ENCODE measurements at regions of chr2 and their contacts with region 1.

Region 1: GRCh38 chr2:238263204-238264071 is 23.6 kb upstream of the HES6 start:
- DNase-seq: peak; percentile 84 to 99 (median 94)

Region 2: GRCh38 chr2:237858294-237859081 is 404.9 kb before region 1 on chr2:
- intact Hi-C with region 1: loop called (anchors 1 kb)
- DNase-seq: peak; percentile 67 to 96 (median 82)

Region 3: GRCh38 chr2:238160206-238161109 is 103.0 kb before region 1 on chr2:
- intact Hi-C with region 1: loop called (anchors 2 kb)
- DNase-seq: peak in 7 of 10 donors; percentile 5 to 77 (median 67)

Region 4: GRCh38 chr2:238803996-238804870 is 540.8 kb after region 1 on chr2:
- intact Hi-C with region 1: no loop called
- DNase-seq: no peak